A673 (cell line): ENCODE measurements at regions of chr19 and their contacts with region 1.

Region 1: DNA sequence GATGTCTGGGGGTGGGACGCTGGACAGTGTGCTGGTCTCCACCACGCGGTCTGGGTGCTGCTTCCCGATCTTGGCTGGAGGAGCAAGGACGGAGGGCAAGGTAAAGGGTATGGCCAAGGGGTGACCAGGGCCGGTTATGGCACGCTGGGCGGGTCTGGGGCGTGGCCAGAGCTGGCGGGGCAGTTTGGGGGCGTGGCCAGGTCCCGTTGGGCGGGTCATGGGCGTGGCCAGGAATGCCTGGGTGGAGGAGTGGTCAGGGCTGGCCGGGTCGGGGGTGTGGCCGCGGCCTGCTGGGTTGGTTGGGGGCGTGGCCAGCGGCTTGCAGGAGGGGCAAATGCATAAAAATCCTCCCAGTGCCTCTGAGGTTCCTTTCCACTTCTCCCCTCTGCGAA is 19.2 kb downstream of the GPX4 start:
- DNase-seq: peak; percentile 70
- H3K4me3 ChIP-seq: no peak overlapping the region
- H3K27ac ChIP-seq: no peak overlapping the region
- H3K4me1 ChIP-seq: peaks cover 6% of the 10 kb centered on the region
- H3K27me3 ChIP-seq: no peaks in the 10 kb centered on the region
- CTCF ChIP-seq: no peak

Region 2: DNA sequence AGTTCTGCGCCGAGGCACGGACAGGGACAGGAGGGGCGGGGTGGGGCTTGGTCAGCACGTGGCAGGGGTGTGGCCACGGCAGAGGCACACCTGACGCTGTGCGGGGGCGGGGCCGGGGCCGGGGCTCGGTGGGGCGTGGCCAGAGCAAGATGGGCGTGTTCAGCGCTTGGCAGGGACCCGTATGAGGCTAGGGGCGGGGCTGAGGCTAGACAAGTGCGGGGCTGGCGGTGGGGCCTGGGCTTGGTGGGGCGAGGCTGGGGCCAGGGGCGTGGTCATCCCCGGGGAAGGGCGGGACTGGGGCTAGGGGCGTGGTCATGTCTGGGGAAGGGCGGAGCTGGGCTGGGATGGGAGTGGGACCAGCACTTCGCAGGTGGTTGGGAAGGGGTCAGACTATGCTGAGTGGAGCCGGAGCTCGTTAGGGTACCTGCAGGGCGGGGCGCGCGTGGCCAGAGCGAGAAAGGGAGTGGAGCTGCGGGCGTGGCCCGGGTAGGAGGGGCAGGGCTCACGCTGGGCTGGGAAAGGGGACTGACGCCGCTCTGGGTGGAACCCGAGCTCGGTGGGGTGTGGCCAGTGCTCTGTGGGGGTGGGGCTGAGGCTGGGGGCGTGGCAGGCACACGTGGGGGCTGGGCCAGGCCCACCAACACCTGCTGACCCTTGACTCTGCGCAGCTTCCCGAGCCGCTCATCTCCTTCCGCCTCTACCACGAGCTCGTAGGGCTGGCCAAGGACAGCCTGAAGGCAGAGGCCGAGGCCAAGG is 40.6 kb before region 1 on chr19:
- CTCF ChIA-PET with region 1: interaction called, 12 read pairs
- POLR2A ChIA-PET with region 1: no interaction called
- intact Hi-C with region 1: no loop called
- DNase-seq: peak; percentile 85
- H3K4me3 ChIP-seq: no peak overlapping the region
- H3K27ac ChIP-seq: no peak overlapping the region
- H3K4me1 ChIP-seq: peaks cover 11% of the 10 kb centered on the region
- H3K27me3 ChIP-seq: no peaks in the 10 kb centered on the region
- CTCF ChIP-seq: no peak

Region 3: GRCh38 chr19:1275260-1275975 is 152.4 kb after region 1 on chr19 and contains the start of gene FAM174C:
- CTCF ChIA-PET with region 1: no interaction called
- POLR2A ChIA-PET with region 1: no interaction called
- intact Hi-C with region 1: no loop called
- DNase-seq: peak; percentile 99
- H3K4me3 ChIP-seq: peak within 1 kb of the TSS; percentile 69
- H3K27ac ChIP-seq: peak within 1 kb of the TSS; percentile 99
- H3K4me1 ChIP-seq: peaks cover 51% of the 10 kb centered on the region
- H3K27me3 ChIP-seq: no peaks in the 10 kb centered on the region
- CTCF ChIP-seq: no peak
- total RNA-seq, gene FAM174C: 69.4 and 88.6 TPM in 2 replicates